ENCODE measurements at regions of chrX and their contacts with region 1.

Region 1: DNA sequence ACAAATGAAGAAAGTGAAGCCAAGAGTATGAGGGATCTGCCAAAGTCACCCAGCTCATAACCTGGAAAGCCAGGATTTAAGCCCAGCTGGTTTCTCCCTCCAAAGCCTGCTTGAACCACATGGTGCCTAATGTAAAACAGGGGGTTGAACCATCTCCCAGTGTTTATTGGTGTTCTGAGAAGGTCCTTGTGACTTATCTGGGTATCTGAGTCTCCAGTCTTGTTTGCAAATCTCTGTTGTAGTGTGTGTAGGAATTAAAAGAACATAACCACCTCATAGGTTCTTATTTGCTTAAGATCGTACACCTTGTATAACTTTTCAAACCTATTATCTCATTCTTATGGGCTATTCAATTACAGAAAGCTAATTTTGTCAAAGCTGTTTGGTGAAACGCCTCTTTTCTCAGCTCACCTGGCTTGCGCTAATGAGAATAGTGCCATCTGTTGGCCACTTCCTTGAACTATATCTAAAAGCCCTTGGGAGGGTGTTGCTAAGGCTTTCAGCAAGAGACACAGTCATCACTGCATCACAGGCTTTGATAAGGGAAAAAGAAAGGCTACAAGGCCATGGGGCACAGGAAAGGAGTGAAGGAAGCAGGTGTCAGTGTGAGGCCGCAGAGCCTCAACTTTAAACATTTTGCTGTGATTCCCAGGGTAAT is 34.0 kb downstream of the ETDB start:
- DNase-seq: no peak

Region 2: GRCh38 chrX:134963041-134963440 is 123.3 kb before region 1 on chrX:
- intact Hi-C with region 1: loop called in 1 of 2 experiments (anchors 5 kb)
- DNase-seq: no peak

Measured in posterior vena cava (tissue), 2 donors.